HAP-1 (cell line): ENCODE measurements at regions of chr4 and their contacts with region 1.

Region 1: GRCh38 chr4:99054428-99054994 is 34.1 kb downstream of the ADH5 start:
- DNase-seq: no peak
- H3K4me3 ChIP-seq: no peak overlapping the region
- H3K4me1 ChIP-seq: 0 out of 2 replicates have a peak, but pooled peaks cover 2% of the 10 kb centered on the region
- H3K27me3 ChIP-seq: no peaks in the 10 kb centered on the region

Region 2: DNA sequence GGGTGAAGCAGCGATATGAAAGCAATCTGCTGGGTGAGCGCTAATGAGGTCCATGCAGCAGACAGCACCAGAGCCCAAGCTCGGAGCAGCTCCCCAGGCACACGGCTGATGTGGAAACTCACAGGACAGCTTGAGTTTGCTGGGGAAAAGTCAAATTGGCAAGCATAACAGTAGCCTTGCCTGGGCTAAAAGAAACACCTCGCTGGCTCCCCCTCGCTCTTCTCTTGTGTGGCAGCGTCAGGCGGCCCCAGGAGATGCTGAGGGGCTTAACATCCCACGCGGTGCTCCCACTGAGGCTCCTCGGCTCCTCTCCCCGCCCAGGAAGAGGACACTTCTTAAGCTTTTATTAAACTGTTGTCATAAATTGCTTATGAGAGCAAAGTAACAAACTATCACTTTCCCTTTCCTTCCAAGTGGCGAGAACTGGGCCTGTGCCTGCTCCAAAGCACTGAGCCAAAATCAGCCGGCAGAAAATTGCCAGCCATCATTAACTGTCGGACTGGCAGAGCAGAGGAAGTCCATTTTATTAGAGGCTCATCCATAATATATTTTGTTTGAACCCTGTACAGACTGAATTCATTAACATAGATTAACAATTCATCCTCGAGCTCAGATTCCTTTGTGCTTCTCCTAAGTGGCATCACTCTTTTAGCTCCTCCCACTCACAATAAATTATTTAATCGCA is 507.5 kb before region 1 on chr4:
- in situ Hi-C with region 1: no loop called
- DNase-seq: no peak
- H3K4me3 ChIP-seq: no peak overlapping the region
- H3K4me1 ChIP-seq: no peaks in the 10 kb centered on the region
- H3K27me3 ChIP-seq: 0 out of 2 replicates have a peak, but pooled peaks cover 2% of the 10 kb centered on the region

Region 3: GRCh38 chr4:98745366-98745765 is 309.1 kb before region 1 on chr4:
- in situ Hi-C with region 1: loop called (anchors 25 kb)
- DNase-seq: peak; percentile 15 to 57
- H3K4me3 ChIP-seq: no peak overlapping the region
- H3K4me1 ChIP-seq: no peaks in the 10 kb centered on the region
- H3K27me3 ChIP-seq: no peaks in the 10 kb centered on the region

Region 4: DNA sequence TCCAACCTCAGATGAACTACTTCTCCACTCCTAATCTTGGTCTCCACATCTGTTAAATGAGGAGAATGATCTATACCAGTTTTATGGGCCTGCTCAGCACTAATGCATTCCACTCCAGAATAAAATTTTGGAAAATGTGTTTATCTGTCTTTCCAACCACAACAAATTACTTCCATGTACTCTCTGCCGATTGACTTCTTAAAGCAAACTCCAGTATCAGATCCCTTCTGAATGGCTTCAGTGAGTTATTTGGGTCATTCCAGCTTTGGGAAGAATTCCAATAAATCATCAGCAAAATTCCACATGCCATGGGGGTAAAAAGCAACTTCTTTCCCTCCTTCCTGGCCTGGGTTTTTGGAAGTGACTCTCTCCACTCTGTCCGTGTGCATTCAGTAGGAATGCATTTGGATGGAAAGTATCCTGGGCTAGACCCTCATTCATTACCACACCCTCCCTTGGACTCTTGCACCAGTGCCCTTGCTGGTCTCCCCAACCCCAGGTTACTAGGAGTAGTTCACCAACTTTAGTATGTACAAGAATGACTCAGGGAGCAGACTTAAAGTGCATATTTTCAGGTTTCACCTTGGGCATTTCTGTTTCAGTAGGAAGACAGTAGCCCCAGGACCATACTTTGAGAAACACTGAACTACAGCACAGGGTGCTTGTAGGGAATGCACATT is 180.0 kb after region 1 on chr4:
- in situ Hi-C with region 1: no loop called
- DNase-seq: no peak
- H3K4me3 ChIP-seq: no peak overlapping the region
- H3K4me1 ChIP-seq: no peaks in the 10 kb centered on the region
- H3K27me3 ChIP-seq: no peaks in the 10 kb centered on the region

Region 5: DNA sequence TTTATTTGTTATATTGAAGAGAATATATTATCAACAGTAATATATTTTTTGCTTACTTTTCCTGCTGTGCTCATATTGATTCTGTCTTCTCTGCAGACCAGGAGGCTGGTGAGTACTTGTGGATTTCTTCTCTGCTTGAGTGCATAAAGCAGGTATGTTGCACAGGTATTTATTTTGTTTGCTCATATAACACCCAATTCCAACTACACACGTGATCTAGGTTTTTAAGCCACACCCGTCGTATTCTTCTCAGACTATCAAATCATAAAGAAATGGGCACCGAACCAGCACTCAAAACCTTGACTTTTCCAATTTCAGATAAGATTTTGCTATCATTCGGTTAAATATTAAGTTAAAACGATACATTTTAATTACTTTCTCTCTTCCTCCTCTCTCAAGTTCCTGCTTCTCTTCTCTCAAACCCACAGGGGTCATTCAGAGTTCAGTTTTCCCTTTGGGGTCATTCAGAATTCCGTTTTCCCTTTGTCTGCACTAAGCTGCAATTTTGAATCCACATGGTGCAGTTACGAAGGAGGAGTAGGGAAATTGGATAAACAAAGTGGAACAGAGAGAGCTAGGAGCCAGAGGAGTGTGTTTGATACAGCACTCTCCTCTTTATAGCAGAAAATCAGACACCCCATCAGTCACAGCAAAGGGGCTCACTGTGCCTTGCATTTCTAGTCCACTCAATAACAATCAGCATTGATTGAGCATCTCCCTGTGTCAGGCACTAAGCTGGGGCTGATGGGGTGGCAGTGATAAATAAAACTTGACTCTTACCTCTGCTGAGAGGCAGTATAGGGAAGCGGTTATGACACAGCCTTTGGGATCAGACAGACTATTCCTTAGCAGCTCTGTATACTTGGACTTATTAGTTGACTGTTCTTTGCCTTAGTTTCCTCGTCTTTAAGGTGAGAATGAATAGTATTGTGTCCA is 298.4 kb after region 1 on chr4 and contains the start of gene ADH1C:
- in situ Hi-C with region 1: no loop called
- DNase-seq: no peak
- H3K4me3 ChIP-seq: no peak within 1 kb of the TSS
- H3K4me1 ChIP-seq: no peaks in the 10 kb centered on the region
- H3K27me3 ChIP-seq: no peaks in the 10 kb centered on the region

Region 6: GRCh38 chr4:99405433-99406115 is 351.1 kb after region 1 on chr4:
- in situ Hi-C with region 1: no loop called
- DNase-seq: peak; percentile 71 to 81
- H3K4me3 ChIP-seq: no peak overlapping the region
- H3K4me1 ChIP-seq: peaks cover 13% of the 10 kb centered on the region
- H3K27me3 ChIP-seq: no peaks in the 10 kb centered on the region